PC-9 (cell line): ENCODE measurements at regions of chr3 and their contacts with region 1.

Region 1: DNA sequence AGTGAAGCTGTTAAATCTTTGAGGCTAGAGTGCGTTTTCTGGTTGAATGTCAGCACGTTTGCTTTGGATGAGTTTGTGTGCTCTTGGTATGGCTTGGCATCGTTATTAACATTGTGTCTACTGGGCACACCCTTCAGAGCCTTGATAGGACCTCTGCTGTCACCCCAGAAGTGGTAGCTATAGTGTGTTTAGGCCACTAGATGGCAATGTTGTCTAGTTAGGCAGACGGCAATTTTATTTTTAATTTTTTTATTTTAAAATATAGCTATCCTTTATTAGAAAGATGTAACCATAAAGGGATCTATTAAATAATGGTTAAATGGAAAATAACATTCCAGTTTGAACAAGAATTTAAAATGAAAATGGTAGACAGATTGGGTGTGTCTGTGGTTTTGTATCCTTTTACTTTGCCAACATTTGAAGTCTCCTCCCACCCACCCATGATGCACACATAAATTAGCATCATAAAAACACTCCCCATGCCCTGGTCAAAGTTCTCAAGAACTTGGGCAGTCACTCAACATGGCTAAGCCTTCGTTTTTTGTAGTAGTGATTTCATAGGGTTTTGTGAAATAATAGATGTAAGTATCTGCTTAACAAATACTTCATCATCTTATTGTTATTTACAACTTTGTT is 200.7 kb downstream of the KCNH8 start:
- DNase-seq: peak in 1 of 2 experiments; percentile 4
- H3K4me3 ChIP-seq: no peak overlapping the region
- H3K27ac ChIP-seq: no peak overlapping the region
- H3K4me1 ChIP-seq: no peaks in the 10 kb centered on the region
- H3K27me3 ChIP-seq: no peaks in the 10 kb centered on the region
- CTCF ChIP-seq: peak; percentile 82

Region 2: GRCh38 chr3:19065027-19065426 is 284.0 kb before region 1 on chr3:
- CTCF ChIA-PET with region 1: no interaction called
- POLR2A ChIA-PET with region 1: no interaction called
- intact Hi-C with region 1: loop called (anchors 10 kb)
- DNase-seq: no peak
- H3K4me3 ChIP-seq: no peak overlapping the region
- H3K27ac ChIP-seq: no peak overlapping the region
- H3K4me1 ChIP-seq: peaks cover 10% of the 10 kb centered on the region
- H3K27me3 ChIP-seq: no peaks in the 10 kb centered on the region
- CTCF ChIP-seq: peak; percentile 59

Region 3: GRCh38 chr3:19543212-19543841 is 194.3 kb after region 1 on chr3:
- CTCF ChIA-PET with region 1: interaction called, 3 read pairs
- POLR2A ChIA-PET with region 1: no interaction called
- intact Hi-C with region 1: loop called (anchors 5 kb)
- DNase-seq: no peak
- H3K4me3 ChIP-seq: no peak overlapping the region
- H3K27ac ChIP-seq: no peak overlapping the region
- H3K4me1 ChIP-seq: no peaks in the 10 kb centered on the region
- H3K27me3 ChIP-seq: no peaks in the 10 kb centered on the region
- CTCF ChIP-seq: peak; percentile 59

Region 4: DNA sequence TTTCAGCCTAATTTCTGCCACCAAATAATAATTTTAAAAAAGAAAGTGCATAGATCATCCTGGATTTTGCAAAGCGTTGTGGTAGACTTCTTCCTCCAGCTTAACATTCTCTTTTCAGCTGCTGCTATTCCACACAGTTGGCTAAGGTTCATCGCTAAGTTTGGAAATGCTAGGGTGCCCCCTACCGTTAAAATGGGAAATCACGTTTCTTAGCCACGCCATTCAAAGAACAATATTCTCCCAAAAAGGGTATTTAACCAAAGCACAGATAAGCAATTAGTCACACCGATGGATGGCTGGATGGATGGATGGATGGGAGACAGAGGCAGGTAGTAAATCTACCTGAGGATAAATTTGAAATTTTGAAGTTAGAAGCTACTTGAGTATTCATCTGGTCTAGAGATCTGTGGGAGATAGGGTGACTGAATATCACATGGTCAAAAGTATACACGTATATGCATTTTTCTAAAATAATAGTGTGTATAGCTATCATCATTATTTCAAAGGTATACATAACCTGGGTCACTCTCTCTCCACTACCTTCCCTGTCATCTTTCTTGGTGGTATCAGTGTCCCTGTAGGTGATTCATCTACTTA is 517.8 kb after region 1 on chr3:
- CTCF ChIA-PET with region 1: interaction called, 11 read pairs
- POLR2A ChIA-PET with region 1: no interaction called
- intact Hi-C with region 1: loop called (anchors 2 kb)
- DNase-seq: peak in 1 of 2 experiments; percentile 49
- H3K4me3 ChIP-seq: no peak overlapping the region
- H3K27ac ChIP-seq: no peak overlapping the region
- H3K4me1 ChIP-seq: no peaks in the 10 kb centered on the region
- H3K27me3 ChIP-seq: no peaks in the 10 kb centered on the region
- CTCF ChIP-seq: peak; percentile 89

Region 5: DNA sequence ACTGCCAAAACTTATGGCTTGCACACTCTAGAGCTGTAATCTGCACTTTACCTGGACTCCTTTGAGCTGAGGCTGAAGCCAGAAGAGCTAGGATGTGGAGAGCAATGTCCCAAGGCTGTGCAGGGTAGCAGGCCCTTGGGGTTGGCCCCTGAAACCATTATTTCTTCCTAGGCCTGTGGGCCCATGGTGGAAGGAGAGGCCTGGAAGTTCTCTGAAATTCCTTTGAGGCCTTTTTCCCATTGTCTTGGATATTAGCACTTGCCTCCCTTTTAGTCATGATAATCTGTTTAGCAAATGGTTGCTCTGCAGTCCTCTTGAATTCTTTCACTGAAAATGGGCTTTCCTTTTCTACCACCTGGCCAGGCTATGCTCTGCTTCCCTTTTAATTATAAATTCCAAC is 939.0 kb after region 1 on chr3:
- CTCF ChIA-PET with region 1: interaction called, 10 read pairs
- POLR2A ChIA-PET with region 1: no interaction called
- intact Hi-C with region 1: no loop called
- DNase-seq: no peak
- H3K4me3 ChIP-seq: no peak overlapping the region
- H3K27ac ChIP-seq: no peak overlapping the region
- H3K4me1 ChIP-seq: no peaks in the 10 kb centered on the region
- H3K27me3 ChIP-seq: no peaks in the 10 kb centered on the region
- CTCF ChIP-seq: no peak